ENCODE measurements at regions of chr12 and their contacts with region 1.

Region 1: GRCh38 chr12:106357549-106358395 is at the start of gene POLR3B:
- DNase-seq: peak; percentile 98
- ATAC-seq: peak; percentile 95
- H3K4me3 Mint-ChIP-seq: peak within 1 kb of the TSS; percentile 94
- H3K27ac Mint-ChIP-seq: peak within 1 kb of the TSS; percentile 85
- H3K4me1 Mint-ChIP-seq: peaks cover 10% of the 10 kb centered on the region
- H3K27me3 Mint-ChIP-seq: no peaks in the 10 kb centered on the region
- CTCF ChIP-seq: peak; percentile 69
- total RNA-seq, gene POLR3B: 8.3 to 9.5 TPM

Region 2: GRCh38 chr12:106254724-106255123 is 103.0 kb before region 1 on chr12:
- CTCF ChIA-PET with region 1: no interaction called
- POLR2A ChIA-PET with region 1: no interaction called
- intact Hi-C with region 1: no loop called
- DNase-seq: no peak
- ATAC-seq: no peak
- H3K4me3 Mint-ChIP-seq: no peak overlapping the region
- H3K27ac Mint-ChIP-seq: no peak overlapping the region
- H3K4me1 Mint-ChIP-seq: no peaks in the 10 kb centered on the region
- H3K27me3 Mint-ChIP-seq: no peaks in the 10 kb centered on the region
- CTCF ChIP-seq: no peak

Region 3: DNA sequence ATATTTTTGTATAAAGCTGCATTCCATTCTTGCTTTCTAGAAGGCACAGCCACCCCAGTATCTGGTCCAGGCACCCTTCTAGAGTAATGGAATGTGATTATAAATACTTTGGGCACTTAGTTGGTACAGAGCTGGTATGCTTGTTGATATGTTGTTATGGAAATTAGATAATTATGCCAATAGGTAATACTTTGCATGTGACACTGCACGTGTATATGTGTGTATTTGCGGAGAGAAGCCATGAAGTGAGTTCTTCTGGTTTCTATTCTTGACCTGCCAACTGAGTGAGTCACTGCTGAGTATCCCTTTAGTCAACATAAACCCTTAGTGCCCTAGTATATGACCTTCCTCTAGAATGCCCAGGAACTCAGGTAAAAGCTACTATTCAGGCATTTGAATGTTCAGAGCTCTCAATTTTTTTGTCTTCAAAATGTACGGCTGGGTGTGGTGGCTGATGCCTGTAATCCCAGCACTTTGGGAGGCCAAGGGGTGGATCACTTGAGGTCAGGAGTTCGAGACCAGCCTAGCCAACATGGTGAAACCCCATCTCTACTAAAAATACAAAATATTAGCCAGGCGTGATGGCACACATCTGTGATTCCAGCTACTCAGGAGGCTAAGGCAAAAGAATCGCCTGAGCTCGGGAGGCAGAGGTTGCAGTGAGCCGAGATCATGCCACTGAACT is 61.4 kb before region 1 on chr12:
- CTCF ChIA-PET with region 1: interaction called, 10 read pairs
- POLR2A ChIA-PET with region 1: no interaction called
- intact Hi-C with region 1: loop called (anchors 5 kb)
- DNase-seq: no peak
- ATAC-seq: no peak
- H3K4me3 Mint-ChIP-seq: no peak overlapping the region
- H3K27ac Mint-ChIP-seq: no peak overlapping the region
- H3K4me1 Mint-ChIP-seq: peaks cover 18% of the 10 kb centered on the region
- H3K27me3 Mint-ChIP-seq: no peaks in the 10 kb centered on the region
- CTCF ChIP-seq: no peak

Region 4: GRCh38 chr12:106302401-106303201 is 55.2 kb before region 1 on chr12 and contains the start of gene TCP11L2:
- CTCF ChIA-PET with region 1: interaction called, 10 read pairs
- POLR2A ChIA-PET with region 1: interaction called, 6 read pairs
- intact Hi-C with region 1: loop called (anchors 5 kb)
- DNase-seq: peak; percentile 90
- ATAC-seq: peak; percentile 75
- H3K4me3 Mint-ChIP-seq: peak within 1 kb of the TSS; percentile 85
- H3K27ac Mint-ChIP-seq: peak within 1 kb of the TSS; percentile 100
- H3K4me1 Mint-ChIP-seq: peaks cover 56% of the 10 kb centered on the region
- H3K27me3 Mint-ChIP-seq: no peaks in the 10 kb centered on the region
- CTCF ChIP-seq: no peak
- total RNA-seq, gene TCP11L2: 11.9 to 13.2 TPM

Region 5: DNA sequence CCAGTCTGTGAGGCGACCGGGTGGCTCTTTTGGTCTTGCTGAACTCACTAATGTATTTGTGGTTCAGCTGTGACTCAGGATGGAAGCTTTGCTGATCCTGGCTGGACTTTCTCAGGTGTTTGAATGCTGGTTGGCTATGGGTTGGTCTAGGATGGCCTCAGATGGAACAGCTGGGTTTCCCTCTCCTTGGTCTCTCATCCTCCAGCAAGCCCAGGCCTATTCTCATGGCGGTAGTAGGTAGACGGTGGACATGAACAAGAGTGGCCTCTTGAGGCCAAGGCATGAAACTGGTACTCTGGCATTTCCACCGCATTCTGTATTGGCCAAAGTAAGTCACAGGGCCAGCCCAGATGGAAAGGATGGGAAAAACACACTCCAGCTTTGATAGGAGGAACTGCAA is 12.0 kb before region 1 on chr12:
- CTCF ChIA-PET with region 1: interaction called, 14 read pairs
- POLR2A ChIA-PET with region 1: interaction called, 5 read pairs
- intact Hi-C with region 1: no loop called
- DNase-seq: no peak
- ATAC-seq: peak; percentile 64
- H3K4me3 Mint-ChIP-seq: no peak overlapping the region
- H3K27ac Mint-ChIP-seq: peak overlapping the region; percentile 61
- H3K4me1 Mint-ChIP-seq: peaks cover 2% of the 10 kb centered on the region
- H3K27me3 Mint-ChIP-seq: no peaks in the 10 kb centered on the region
- CTCF ChIP-seq: peak; percentile 16

Region 6: DNA sequence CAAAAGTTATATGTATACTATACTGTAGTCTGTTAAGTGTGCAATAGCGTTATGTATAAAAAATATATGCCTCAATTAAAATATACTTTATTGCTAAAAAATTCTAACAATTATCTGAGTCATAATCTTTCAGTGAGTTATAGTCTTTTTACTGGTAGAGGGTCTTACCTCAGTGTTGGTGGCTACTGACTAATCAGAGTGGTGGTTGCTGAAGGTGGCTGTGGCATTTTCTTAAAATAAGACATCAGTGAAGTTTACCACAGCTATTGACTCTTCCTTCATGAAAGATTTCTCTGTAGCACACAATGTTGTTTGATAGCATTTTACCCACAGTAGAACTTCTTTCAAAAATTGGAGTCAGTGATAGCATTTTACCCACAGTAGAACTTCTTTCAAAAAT is 23.2 kb after region 1 on chr12:
- CTCF ChIA-PET with region 1: interaction called, 32 read pairs
- POLR2A ChIA-PET with region 1: interaction called, 3 read pairs
- intact Hi-C with region 1: no loop called
- DNase-seq: no peak
- ATAC-seq: no peak
- H3K4me3 Mint-ChIP-seq: no peak overlapping the region
- H3K27ac Mint-ChIP-seq: no peak overlapping the region
- H3K4me1 Mint-ChIP-seq: peaks cover 13% of the 10 kb centered on the region
- H3K27me3 Mint-ChIP-seq: no peaks in the 10 kb centered on the region
- CTCF ChIP-seq: no peak

Region 7: GRCh38 chr12:106841510-106842302 is 483.9 kb after region 1 on chr12:
- CTCF ChIA-PET with region 1: interaction called, 17 read pairs
- POLR2A ChIA-PET with region 1: interaction called, 3 read pairs
- intact Hi-C with region 1: no loop called
- DNase-seq: peak; percentile 59
- ATAC-seq: no peak
- H3K4me3 Mint-ChIP-seq: no peak overlapping the region
- H3K27ac Mint-ChIP-seq: no peak overlapping the region
- H3K4me1 Mint-ChIP-seq: peaks cover 13% of the 10 kb centered on the region
- H3K27me3 Mint-ChIP-seq: no peaks in the 10 kb centered on the region
- CTCF ChIP-seq: peak; percentile 65

Measured in activated CD8-positive, alpha-beta T cell treated with anti-CD3 and anti-CD28 coated beads for 36 hours (primary cell).